Left cardiac atrium (tissue), 4 donors: ENCODE measurements at regions of chr12 and their contacts with region 1.

Region 1: DNA sequence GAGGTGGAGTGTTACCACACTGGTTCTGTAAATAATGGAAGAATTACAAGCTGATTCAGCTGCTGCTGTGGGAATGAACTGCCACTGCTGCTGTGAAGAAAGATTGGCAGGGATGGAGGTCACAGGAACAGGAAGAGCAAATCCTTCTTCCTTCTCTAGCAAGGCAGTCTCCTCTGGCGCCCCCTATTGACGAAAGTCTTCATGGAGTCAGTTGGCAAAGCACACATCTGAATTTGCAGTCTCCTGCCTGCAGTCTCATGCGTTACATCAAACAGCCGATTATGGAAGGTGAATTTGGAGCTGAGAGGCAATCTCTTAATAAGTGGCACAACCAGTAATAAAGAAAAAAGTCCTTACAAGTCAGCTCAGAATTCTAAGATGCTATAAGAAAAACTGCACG is 106.0 kb upstream of the TMTC1 start:
- DNase-seq: peak; percentile 63
- ATAC-seq: peak; percentile 23 to 41

Region 2: GRCh38 chr12:29534935-29535334 is 354.8 kb before region 1 on chr12:
- intact Hi-C with region 1: loop called in 1 of 2 experiments (anchors 10 kb)
- DNase-seq: no peak
- ATAC-seq: peak in 1 of 2 donors; percentile 30

Region 3: GRCh38 chr12:29552324-29552927 is 337.3 kb before region 1 on chr12:
- intact Hi-C with region 1: loop called in 1 of 2 experiments (anchors 10 kb)
- DNase-seq: peak; percentile 60
- ATAC-seq: peak; percentile 84 to 91

Region 4: DNA sequence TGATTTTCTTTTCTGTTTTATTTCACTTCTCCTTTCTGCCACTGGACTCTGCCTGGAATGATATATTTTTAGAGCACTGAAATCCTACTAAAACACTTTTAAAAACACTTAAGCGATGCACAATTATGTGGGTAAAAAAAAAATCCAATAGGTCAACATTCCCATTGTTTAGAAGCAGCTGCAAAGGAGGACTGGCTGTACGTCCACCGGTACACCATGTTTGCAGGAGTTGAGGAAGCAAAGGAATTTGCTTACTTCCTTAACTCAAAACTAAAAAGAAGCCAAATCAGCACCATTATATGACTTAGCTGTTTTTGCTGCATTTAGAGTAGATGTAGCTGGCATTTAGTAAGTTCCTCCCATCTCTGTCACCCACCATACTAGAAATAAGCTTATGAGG is 80.8 kb after region 1 on chr12:
- intact Hi-C with region 1: no loop called
- DNase-seq: no peak
- ATAC-seq: no peak